ENCODE measurements at regions of chr6 and their contacts with region 1.

Region 1: GRCh38 chr6:85678602-85679444 is 36.1 kb upstream of the SYNCRIP start:
- DNase-seq: peak; percentile 96
- CTCF ChIP-seq: no peak

Region 2: GRCh38 chr6:85449818-85450759 is 228.7 kb before region 1 on chr6 and contains the start of gene NT5E:
- CTCF ChIA-PET with region 1: interaction called, 3 read pairs
- POLR2A ChIA-PET with region 1: interaction called, 16 read pairs
- DNase-seq: peak; percentile 87
- CTCF ChIP-seq: peak; percentile 30

Region 3: GRCh38 chr6:85569323-85569722 is 109.5 kb before region 1 on chr6:
- CTCF ChIA-PET with region 1: no interaction called
- POLR2A ChIA-PET with region 1: interaction called, 10 read pairs
- DNase-seq: no peak
- CTCF ChIP-seq: no peak

Region 4: DNA sequence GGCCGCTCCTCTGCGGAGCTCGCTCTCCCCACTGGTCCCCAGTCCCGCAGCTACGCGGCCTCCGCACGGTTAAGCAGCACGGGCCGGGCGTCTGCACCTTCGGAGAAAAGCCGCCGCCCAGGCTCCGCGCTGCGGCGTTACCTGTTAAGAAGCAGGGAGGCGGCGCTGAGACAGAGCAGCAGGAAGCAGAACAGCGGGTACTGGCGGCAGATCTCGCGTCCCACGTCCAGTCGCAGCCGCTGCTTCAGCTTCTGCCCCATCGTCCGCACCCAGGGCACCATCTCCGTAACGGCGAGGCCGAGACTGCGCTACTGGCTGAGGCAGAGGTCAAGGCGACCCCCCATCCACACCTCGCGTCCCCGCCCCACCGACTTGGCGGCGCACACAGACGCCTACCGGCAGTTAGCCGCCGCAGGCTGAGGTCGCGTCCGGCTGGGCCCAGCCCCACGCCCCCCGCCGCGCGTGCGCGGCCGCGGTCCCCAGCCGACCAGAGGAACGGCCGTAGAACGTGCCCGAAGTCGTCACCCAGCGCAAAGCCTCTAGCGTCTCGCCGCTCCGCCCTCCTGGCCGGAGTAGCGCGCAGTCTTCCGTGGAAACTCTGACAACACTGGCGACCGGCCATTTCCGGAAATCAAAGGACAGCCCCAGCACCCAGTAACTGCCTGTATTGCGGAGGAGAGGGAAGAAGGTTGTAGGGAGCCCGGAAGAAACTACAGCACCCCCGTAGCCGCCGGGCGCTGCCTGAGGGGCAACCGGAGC is 85.2 kb before region 1 on chr6 and contains the start of gene SNX14:
- CTCF ChIA-PET with region 1: no interaction called
- POLR2A ChIA-PET with region 1: interaction called, 20 read pairs
- DNase-seq: peak; percentile 94
- CTCF ChIP-seq: no peak

Region 5: DNA sequence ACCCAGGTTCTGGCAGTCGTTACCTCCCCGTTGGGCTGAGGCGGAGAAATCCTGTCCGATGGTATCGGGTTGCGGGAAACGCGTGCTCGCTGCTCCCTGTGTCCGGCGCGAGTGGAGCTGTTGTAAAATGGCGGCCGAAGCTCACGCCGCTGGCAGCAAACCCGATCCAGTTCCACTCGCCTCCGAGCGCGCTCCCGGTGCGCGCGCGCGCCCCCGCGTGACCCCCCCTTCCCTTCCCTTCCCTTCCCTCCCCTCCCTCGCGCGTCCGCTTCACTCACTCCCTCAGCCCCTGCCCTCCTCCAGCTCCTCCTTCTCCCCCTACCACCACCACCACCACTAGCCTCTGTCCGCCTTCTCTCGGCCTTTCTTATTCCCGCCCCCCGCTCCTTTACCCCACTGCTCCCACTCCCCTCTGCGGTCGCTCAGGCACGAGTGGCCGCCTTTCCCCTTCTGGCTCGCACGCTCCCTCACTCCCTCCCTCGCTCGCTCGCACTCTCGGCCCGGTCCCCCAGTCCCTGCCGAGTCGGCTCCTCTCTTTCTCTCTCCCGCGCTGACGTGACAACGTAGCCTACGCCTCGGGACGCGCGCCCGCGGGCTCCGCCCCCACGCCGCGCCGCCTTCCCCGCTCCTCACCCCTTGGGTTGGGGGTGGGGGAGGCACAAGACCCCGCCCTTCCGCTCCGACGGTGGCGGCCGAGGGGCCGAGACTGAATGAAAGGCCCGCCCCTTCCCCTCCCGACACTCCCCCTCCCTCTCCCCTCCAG is 35.9 kb before region 1 on chr6 and contains the start of gene SYNCRIP:
- CTCF ChIA-PET with region 1: interaction called, 8 read pairs
- POLR2A ChIA-PET with region 1: interaction called, 254 read pairs
- DNase-seq: peak; percentile 92
- CTCF ChIP-seq: no peak

Region 6: DNA sequence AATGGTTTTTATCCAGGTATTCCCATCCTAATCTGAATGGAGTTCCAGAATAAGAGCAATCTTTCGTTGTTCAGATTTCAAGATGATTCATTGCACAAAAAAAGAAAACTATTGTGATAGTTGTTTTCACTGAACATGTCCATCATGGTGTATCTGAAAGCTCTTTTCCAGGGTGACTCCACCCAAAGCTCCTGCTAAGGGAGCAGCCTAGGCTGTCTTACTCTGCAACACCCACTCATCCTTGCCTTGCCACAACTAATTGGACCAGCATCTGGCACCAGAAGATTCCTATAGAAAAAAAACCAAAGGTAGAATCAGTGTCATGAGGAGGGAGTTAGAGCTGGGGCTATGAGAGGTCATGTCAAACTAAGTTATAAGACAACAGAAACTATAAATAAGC is 28.2 kb before region 1 on chr6:
- CTCF ChIA-PET with region 1: interaction called, 6 read pairs
- POLR2A ChIA-PET with region 1: interaction called, 254 read pairs
- DNase-seq: no peak
- CTCF ChIP-seq: no peak

Region 7: DNA sequence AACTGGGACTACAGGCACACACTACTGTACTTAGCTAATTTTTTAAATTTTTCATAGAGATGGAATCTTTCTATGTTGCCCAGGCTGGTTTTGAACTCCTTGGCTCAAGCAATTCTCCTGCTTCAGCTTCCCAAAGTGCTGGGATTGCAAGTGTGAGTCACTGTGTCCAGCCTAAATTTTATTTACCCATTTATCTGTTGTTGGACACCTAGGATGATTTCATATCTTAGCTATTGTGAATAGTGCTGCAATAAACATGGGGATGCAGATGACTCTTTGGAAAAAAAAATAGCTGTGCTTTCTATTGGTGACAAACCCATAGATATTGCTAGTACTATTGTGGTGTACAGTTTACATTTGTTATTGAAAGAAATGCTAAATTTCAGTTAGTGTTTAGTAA is 16.6 kb before region 1 on chr6:
- CTCF ChIA-PET with region 1: no interaction called
- POLR2A ChIA-PET with region 1: interaction called, 17 read pairs
- DNase-seq: no peak
- CTCF ChIP-seq: no peak

Measured in GM10248 (cell line).